ENCODE measurements at regions of chr11 and their contacts with region 1.

Region 1: DNA sequence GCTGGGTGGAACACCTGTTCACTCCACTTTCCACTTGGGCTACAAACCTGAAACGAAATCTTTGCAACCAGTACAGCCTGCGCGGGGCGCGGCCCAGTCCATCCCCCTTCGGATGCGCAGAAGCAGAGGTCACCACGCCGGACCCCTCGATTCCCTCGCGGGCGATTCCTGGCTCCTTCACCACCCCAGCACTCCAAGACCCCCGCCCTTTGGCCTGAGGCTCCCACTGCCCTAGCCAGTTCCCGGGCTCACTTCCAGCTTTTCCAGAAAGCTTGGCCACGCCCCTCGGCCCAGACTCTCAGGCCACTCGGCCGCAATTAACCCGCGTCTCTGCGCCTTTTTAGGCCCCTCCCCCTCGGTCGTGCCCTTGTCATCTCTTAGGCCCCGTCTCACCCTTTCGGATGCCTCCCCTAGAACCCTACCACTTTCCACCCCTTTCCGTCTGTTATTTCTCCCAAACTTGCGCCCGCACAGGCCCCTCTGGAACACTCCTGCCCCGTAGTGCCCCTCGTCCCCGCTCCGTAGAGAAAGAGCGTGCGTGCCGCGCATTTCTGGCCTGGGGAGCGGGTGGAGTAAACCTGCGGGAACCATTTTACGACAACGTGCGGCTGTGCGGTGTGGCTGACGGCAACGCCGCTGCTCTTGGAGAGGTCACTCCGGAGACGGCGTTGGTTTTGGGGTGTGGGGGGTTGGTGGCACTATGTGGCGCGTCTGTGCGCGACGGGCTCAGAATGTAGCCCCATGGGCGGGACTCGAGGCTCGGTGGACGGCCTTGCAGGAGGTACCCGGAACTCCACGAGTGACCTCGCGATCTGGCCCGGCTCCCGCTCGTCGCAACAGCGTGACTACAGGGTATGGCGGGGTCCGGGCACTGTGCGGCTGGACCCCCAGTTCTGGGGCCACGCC is at the start of gene DLAT:
- DNase-seq: peak; percentile 78
- ATAC-seq: peak; percentile 90
- H3K4me3 ChIP-seq: peak within 1 kb of the TSS; percentile 74
- H3K27ac ChIP-seq: peak within 1 kb of the TSS; percentile 89
- H3K4me1 ChIP-seq: peaks cover 9% of the 10 kb centered on the region
- H3K27me3 ChIP-seq: no peaks in the 10 kb centered on the region
- CTCF ChIP-seq: no peak
- EP300 ChIP-seq: peak; percentile 44 to 49; a peak in 1 of 4 replicates
- POLR2A ChIP-seq: peak; percentile 91
- RAD21 ChIP-seq: no peak
- polyA plus RNA-seq, gene DLAT: 16.5 to 21.4 TPM

Region 2: DNA sequence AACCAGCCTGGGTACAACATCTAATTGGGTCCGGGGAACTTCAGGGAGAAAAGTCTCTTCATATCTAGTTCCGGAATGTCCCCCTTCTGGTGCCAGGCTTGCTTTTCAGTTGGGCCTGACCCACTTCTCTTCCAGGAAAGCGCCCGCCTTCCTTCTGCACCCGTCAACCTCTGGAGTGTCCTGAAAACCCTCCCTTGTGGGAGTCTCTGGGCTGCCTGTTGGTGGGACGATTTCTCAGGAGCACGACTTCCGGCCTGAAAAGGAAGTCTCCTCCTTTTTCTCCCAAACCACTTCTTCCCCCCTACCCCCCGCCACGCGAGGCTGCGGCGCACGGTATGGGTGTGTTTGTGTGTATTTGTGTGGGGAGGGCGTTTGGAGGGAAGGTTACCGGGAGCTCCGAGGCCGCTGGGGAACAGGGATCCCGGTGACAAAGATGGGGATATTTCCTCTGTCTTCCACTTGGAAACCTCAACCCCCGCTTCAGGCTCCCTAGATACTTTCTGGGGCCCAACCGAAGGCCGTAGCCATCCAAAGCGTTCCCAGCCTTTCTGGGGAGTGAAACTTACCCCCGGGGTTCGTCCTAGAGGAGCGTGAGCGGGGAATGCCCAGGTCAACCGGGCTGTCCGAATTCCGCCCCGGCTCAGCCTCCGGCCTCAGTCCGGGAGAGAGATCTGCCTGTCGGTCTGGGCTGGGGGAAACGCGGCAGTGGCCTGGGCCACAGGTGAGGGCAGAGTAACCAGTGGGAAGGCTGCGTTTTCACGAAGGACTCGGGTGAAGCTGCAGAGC is 49.2 kb after region 1 on chr11 and contains the start of gene NKAPD1:
- CTCF ChIA-PET with region 1: no interaction called
- POLR2A ChIA-PET with region 1: no interaction called
- RAD21 ChIA-PET with region 1: interaction called, 3 read pairs
- SMC1A ChIA-PET with region 1: no interaction called
- in situ Hi-C with region 1: no loop called
- intact Hi-C with region 1: loop called (anchors 2 kb)
- DNase-seq: peak; percentile 88
- ATAC-seq: peak; percentile 92
- H3K4me3 ChIP-seq: peak within 1 kb of the TSS; percentile 85
- H3K27ac ChIP-seq: peak within 1 kb of the TSS; percentile 97
- H3K4me1 ChIP-seq: 0 out of 2 replicates have a peak, but pooled peaks cover 3% of the 10 kb centered on the region
- H3K27me3 ChIP-seq: no peaks in the 10 kb centered on the region
- CTCF ChIP-seq: no peak
- EP300 ChIP-seq: no peak
- POLR2A ChIP-seq: peak; percentile 78
- RAD21 ChIP-seq: peak; percentile 4; the same call in 1 of the 2 replicates
- polyA plus RNA-seq, gene NKAPD1: 9.6 to 11.5 TPM

Region 3: DNA sequence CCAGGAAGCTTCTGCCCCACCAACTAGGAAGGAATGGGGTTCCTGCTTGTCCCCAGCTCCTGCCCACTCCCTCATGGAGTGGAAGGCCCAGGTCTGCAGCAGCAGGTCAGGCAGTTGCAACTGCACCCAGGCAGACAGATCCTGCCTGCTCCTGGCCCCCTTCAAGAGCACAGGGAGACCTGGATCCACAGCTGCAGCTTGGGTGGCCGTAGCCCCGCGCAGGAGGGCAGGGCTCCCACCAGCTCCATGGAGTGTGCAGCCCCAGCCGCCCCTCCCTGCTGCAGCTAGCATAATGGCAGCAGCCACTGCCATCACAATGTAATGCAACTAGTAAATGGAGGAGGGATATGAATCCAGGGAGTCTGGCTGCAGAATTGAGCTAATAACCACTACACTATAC is 423.1 kb after region 1 on chr11:
- CTCF ChIA-PET with region 1: no interaction called
- POLR2A ChIA-PET with region 1: no interaction called
- RAD21 ChIA-PET with region 1: no interaction called
- SMC1A ChIA-PET with region 1: no interaction called
- in situ Hi-C with region 1: no loop called
- intact Hi-C with region 1: no loop called
- DNase-seq: no peak
- ATAC-seq: no peak
- H3K4me3 ChIP-seq: no peak overlapping the region
- H3K27ac ChIP-seq: no peak overlapping the region
- H3K4me1 ChIP-seq: no peaks in the 10 kb centered on the region
- H3K27me3 ChIP-seq: no peaks in the 10 kb centered on the region
- CTCF ChIP-seq: no peak
- EP300 ChIP-seq: no peak
- POLR2A ChIP-seq: no peak
- RAD21 ChIP-seq: no peak

Measured in GM12878 (cell line).